ENCODE measurements at regions of chr18 and their contacts with region 1.

Region 1: GRCh38 chr18:48940854-48941611 is 9.7 kb downstream of the SMAD7 start:
- DNase-seq: peak; percentile 86
- H3K4me3 Mint-ChIP-seq: peak overlapping the region; percentile 74
- H3K27ac Mint-ChIP-seq: peak overlapping the region; percentile 97
- H3K4me1 Mint-ChIP-seq: peaks cover 96% of the 10 kb centered on the region
- H3K27me3 Mint-ChIP-seq: no peaks in the 10 kb centered on the region

Region 2: GRCh38 chr18:48922801-48923730 is 18.0 kb before region 1 on chr18:
- CTCF ChIA-PET with region 1: no interaction called
- POLR2A ChIA-PET with region 1: interaction called, 12 read pairs
- DNase-seq: peak; percentile 45
- H3K4me3 Mint-ChIP-seq: peak overlapping the region; percentile 63
- H3K27ac Mint-ChIP-seq: peak overlapping the region; percentile 71
- H3K4me1 Mint-ChIP-seq: peaks cover 79% of the 10 kb centered on the region
- H3K27me3 Mint-ChIP-seq: no peaks in the 10 kb centered on the region

Region 3: DNA sequence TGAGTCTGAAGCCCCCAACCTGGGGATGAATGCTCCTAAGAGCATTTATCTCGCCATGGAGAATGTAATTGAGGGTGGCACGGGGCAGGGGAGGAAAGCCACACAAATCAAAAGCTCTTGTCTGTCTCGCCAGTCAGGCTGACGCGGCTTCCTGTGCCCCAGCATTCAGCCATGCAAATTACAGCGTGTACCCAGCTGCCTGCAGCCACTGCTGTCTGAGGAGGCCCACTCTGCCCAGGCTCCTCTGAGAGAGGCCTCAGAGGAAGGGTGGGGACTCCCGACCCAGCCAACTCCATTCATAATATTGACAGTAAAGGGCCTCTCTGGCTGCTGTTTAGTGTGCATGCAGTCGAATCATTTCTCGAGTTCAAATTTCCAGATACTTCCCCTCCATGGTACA is 12.2 kb before region 1 on chr18:
- CTCF ChIA-PET with region 1: no interaction called
- POLR2A ChIA-PET with region 1: interaction called, 18 read pairs
- DNase-seq: peak; percentile 84
- H3K4me3 Mint-ChIP-seq: peak overlapping the region; percentile 60
- H3K27ac Mint-ChIP-seq: peak overlapping the region; percentile 84
- H3K4me1 Mint-ChIP-seq: peaks cover 98% of the 10 kb centered on the region
- H3K27me3 Mint-ChIP-seq: no peaks in the 10 kb centered on the region

Region 4: DNA sequence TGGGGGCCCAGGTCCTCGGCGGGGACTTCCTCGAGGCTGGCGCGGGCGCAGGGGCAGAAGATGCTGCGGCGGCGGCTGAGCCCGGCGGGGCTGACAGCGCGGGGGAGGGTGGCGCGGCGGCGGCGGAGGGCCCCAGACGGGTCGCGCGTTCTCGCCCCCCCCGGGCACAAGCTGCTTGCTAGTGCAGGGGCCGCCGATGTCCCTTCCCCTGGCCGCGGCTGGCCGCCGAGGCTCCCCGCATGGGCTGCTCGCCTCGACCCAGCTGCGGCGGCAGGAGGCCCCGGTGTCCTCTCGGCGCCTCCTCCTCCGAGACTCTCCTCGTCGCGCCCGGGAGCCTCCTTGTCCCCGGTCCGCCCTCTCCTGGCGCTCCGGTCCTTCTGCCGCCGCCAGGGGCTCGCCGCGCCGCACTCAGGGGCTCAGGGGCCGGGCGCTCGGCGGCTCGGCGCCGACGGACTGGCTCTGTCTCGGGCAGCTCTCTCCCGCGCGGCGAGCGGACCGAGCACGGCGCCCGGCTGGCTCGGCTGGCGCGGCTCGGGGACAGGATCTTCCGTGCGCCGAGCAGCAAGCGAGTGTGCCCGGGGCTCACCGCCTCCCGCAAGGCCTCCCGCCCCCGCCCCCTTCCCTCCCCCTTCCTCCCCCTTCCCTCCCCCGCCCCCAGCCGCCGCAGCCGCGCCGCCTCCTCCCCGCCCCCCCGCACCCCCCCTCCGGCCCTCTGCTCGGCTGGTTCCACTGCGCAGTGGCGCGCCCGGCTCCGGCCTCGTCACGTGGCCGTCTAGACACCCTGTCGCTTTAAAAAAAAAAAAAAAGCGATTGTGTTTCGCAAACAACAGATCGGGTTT is 10.6 kb after region 1 on chr18:
- CTCF ChIA-PET with region 1: interaction called, 6 read pairs
- POLR2A ChIA-PET with region 1: interaction called, 37 read pairs
- DNase-seq: peak; percentile 83
- H3K4me3 Mint-ChIP-seq: peak overlapping the region; percentile 81
- H3K27ac Mint-ChIP-seq: peak overlapping the region; percentile 76
- H3K4me1 Mint-ChIP-seq: peaks cover 47% of the 10 kb centered on the region
- H3K27me3 Mint-ChIP-seq: no peaks in the 10 kb centered on the region